ENCODE measurements at regions of chr3 and their contacts with region 1.

Region 1: GRCh38 chr3:195450731-195451229 is 8.0 kb upstream of the ACAP2 start:
- DNase-seq: peak; percentile 35
- H3K4me3 ChIP-seq: no peak overlapping the region
- H3K27me3 ChIP-seq: no peaks in the 10 kb centered on the region
- CTCF ChIP-seq: no peak

Region 2: GRCh38 chr3:196867507-196868296 is 1416.9 kb after region 1 on chr3 and contains the start of gene SENP5:
- CTCF ChIA-PET with region 1: no interaction called
- POLR2A ChIA-PET with region 1: interaction called, 13 read pairs
- DNase-seq: peak; percentile 27
- H3K4me3 ChIP-seq: peak within 1 kb of the TSS; percentile 94
- H3K27me3 ChIP-seq: no peaks in the 10 kb centered on the region
- CTCF ChIP-seq: no peak
- polyA plus RNA-seq, gene SENP5: 12.0 and 16.6 TPM in 2 replicates

Measured in BJ (cell line).